WTC11 (cell line): ENCODE measurements at regions of chr4 and their contacts with region 1.

Region 1: DNA sequence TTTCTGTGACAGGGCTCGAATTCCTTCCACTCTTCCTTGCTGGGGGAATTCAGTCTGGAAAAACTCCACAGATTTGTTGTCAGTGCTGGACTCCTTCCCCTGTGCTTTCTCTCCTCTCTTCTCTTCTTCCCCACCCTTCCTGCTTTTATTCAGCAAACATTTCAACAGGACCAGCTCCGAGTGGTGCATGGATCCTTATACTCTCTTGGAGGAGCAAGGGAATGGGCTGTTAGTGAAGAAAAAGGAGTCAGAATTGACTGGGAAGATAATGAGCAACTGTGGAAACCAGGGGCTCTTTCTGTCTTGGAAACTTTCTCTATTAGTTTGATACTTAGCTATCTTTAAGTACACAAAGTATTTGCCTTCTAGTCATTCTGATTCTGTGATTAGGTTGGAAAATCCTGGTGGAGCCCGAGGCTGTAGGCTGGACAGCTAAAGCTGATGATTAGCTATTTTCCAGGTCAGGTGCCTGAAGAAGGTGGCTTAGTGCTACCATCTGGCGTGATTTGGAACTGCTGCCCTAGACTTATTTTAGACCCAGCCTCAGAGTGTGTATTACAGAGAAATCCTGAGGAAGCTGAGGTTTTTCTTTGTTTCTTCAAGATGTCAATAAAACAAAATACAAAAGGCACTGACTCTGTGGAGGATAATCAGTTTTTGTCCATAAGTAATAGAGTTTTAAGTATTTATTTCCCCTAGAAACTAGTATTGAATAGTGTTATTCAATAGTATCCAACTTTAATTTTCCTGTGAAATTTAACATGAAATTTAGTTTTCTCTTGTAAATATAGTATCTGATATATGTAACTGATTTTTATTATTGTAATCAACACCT is 38.4 kb downstream of the NAP1L5 start:
- DNase-seq: peak; percentile 32
- ATAC-seq: peak; percentile 99
- H3K4me3 Mint-ChIP-seq: no peak overlapping the region
- H3K27ac Mint-ChIP-seq: no peak overlapping the region; the same call in 1 of the 2 replicates
- H3K4me1 Mint-ChIP-seq: peaks cover 19% of the 10 kb centered on the region
- H3K27me3 Mint-ChIP-seq: no peaks in the 10 kb centered on the region
- CTCF ChIP-seq: peak; percentile 43; the same call in 1 of the 2 replicates

Region 2: GRCh38 chr4:88523325-88524129 is 135.7 kb before region 1 on chr4 and contains the start of gene PYURF:
- CTCF ChIA-PET with region 1: interaction called, 74 read pairs
- POLR2A ChIA-PET with region 1: no interaction called
- DNase-seq: peak; percentile 95
- ATAC-seq: peak; percentile 93
- H3K4me3 Mint-ChIP-seq: peak within 1 kb of the TSS; percentile 95
- H3K27ac Mint-ChIP-seq: peak within 1 kb of the TSS; percentile 68
- H3K4me1 Mint-ChIP-seq: peaks cover 33% of the 10 kb centered on the region
- H3K27me3 Mint-ChIP-seq: no peaks in the 10 kb centered on the region
- CTCF ChIP-seq: no peak
- total RNA-seq, gene PYURF: 40.9 to 45.3 TPM (median 43.6 TPM) in 3 replicates

Region 3: DNA sequence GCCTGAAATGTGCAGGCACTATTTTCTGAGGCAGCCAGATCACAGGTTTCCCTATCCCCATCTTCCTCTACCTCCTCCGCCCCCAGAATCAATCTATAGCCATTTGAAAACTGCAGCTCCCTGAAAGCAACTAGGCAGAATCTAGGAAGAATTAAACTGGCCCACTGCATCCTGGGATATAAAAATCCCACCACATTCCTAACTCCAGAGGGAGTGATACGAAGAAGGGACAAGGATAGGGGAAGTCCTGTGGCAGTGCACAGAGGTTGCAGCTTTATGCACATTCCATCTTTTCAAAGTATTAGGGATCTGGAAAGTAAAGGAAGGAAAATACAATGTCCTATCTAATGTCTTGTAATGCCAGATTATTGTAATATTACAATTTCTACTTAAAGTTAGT is 85.3 kb before region 1 on chr4:
- CTCF ChIA-PET with region 1: interaction called, 18 read pairs
- POLR2A ChIA-PET with region 1: no interaction called
- DNase-seq: no peak
- ATAC-seq: peak; percentile 98
- H3K4me3 Mint-ChIP-seq: no peak overlapping the region
- H3K27ac Mint-ChIP-seq: no peak overlapping the region
- H3K4me1 Mint-ChIP-seq: peaks cover 18% of the 10 kb centered on the region
- H3K27me3 Mint-ChIP-seq: peaks cover 2% of the 10 kb centered on the region; the same call in 1 of the 2 replicates
- CTCF ChIP-seq: no peak

Region 4: DNA sequence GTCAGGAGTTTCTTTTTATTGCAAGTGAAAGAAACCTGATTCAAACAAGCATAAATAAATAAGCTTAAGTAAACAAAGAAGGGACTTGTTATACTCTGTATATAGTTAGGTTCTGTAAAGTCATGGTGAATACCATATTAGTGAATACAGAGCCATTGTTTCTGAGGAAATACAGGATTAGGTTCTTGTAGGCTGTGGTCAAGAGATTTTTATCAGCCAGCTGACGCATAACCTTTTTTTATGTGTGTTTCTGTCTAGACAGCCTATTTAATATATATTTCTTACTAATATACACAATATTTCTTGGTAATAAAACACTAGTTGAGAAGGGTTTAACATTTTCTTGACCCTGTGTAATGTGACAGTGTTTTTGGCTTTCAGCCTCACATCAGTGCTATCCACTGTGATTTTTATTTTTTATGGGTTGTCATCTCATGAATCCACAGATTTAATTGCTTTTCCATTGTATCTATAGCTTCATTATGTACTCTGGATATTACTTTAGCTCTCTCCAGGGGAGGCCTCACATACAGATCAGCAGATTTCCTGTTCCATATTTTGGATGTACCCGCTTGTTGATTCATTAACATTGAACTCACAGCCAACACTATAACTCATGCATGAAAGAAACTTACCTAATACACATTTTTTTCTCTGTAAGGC is 59.0 kb before region 1 on chr4:
- CTCF ChIA-PET with region 1: interaction called, 16 read pairs
- POLR2A ChIA-PET with region 1: no interaction called
- DNase-seq: no peak
- ATAC-seq: no peak
- H3K4me3 Mint-ChIP-seq: no peak overlapping the region
- H3K27ac Mint-ChIP-seq: no peak overlapping the region
- H3K4me1 Mint-ChIP-seq: peaks cover 39% of the 10 kb centered on the region
- H3K27me3 Mint-ChIP-seq: peaks cover 10% of the 10 kb centered on the region
- CTCF ChIP-seq: no peak

Region 5: DNA sequence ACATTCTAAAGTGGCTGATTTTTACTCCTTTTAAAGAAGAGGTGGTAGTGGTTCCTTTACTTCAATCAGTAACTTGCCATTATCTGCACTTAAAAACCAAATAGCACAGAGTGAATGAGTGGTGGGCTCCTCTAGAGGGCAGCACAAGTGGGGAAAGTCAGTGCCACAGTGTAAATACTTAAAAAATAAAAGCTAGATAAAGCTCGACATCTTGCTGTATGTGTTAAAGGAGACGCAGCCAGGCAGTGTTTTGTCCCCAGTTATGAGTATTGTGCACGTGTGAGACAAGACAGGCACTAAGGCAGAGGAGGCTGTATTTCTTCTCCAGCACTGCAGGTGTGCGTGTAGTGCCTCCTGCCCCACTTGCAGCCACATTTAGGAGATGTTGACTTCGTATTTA is 13.7 kb after region 1 on chr4:
- CTCF ChIA-PET with region 1: interaction called, 19 read pairs
- POLR2A ChIA-PET with region 1: no interaction called
- DNase-seq: peak; percentile 47
- ATAC-seq: peak; percentile 91
- H3K4me3 Mint-ChIP-seq: no peak overlapping the region
- H3K27ac Mint-ChIP-seq: no peak overlapping the region
- H3K4me1 Mint-ChIP-seq: 0 out of 2 replicates have a peak, but pooled peaks cover 2% of the 10 kb centered on the region
- H3K27me3 Mint-ChIP-seq: no peaks in the 10 kb centered on the region
- CTCF ChIP-seq: peak; percentile 31; the same call in 1 of the 2 replicates

Region 6: GRCh38 chr4:88719381-88719780 is 60.1 kb after region 1 on chr4:
- CTCF ChIA-PET with region 1: no interaction called
- POLR2A ChIA-PET with region 1: no interaction called
- DNase-seq: no peak
- ATAC-seq: no peak
- H3K4me3 Mint-ChIP-seq: no peak overlapping the region
- H3K27ac Mint-ChIP-seq: no peak overlapping the region
- H3K4me1 Mint-ChIP-seq: no peaks in the 10 kb centered on the region
- H3K27me3 Mint-ChIP-seq: peaks cover 3% of the 10 kb centered on the region; the same call in 1 of the 2 replicates
- CTCF ChIP-seq: no peak

Region 7: DNA sequence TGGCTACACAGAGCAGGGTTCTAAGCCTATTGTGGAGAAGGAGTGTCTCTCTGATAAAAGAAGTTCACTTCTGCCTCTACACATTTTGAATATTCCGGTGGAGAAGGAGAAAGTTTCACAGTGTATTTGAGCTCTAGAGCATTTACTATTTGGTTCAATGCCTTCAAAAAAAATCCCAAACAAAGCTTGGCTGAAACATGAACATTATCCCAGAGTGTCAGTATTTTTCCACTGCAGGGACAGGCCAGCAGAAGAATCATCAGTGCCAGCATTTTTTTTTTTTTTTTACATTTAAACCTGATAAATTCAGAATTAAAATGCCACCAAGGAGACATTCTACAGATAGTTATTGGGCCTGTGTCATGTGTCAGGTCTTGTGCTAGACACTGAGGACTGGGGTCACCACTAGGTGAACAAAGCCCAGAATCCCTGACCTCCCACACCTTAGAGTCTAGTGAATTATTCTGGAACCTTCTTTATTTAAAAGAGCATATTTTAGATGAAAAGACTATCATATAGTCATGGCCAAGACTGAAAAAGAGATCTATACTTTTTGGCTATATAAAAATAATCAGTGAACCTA is 86.4 kb after region 1 on chr4:
- CTCF ChIA-PET with region 1: no interaction called
- POLR2A ChIA-PET with region 1: no interaction called
- DNase-seq: no peak
- ATAC-seq: no peak
- H3K4me3 Mint-ChIP-seq: no peak overlapping the region
- H3K27ac Mint-ChIP-seq: 0 out of 2 replicates have a peak overlapping the region, but pooled peaks have one; percentile 29
- H3K4me1 Mint-ChIP-seq: peaks cover 5% of the 10 kb centered on the region
- H3K27me3 Mint-ChIP-seq: no peaks in the 10 kb centered on the region
- CTCF ChIP-seq: no peak

Region 8: DNA sequence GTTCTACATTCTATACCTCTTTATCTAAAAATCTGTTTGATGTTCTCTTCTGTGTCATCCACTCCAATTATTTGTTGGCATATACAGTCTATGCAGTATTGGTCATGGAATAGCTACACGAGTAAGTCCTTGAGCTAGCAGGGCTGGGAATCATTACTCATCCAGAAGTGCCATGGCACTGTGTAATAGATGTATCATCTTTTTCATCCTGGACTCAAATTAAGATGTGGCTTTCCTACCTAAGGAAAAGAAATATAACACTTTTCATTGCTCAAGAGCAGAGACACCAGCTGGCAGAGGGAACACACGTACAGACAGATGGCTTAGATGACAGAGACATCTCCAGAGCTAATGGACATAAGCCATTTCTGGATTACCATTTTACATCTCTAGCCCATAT is 237.9 kb after region 1 on chr4:
- CTCF ChIA-PET with region 1: no interaction called
- POLR2A ChIA-PET with region 1: no interaction called
- DNase-seq: no peak
- ATAC-seq: no peak
- H3K4me3 Mint-ChIP-seq: no peak overlapping the region
- H3K27ac Mint-ChIP-seq: no peak overlapping the region
- H3K4me1 Mint-ChIP-seq: peaks cover 9% of the 10 kb centered on the region
- H3K27me3 Mint-ChIP-seq: no peaks in the 10 kb centered on the region
- CTCF ChIP-seq: no peak

Region 9: GRCh38 chr4:88928852-88929251 is 269.6 kb after region 1 on chr4:
- CTCF ChIA-PET with region 1: no interaction called
- POLR2A ChIA-PET with region 1: no interaction called
- DNase-seq: no peak
- ATAC-seq: no peak
- H3K4me3 Mint-ChIP-seq: no peak overlapping the region
- H3K27ac Mint-ChIP-seq: no peak overlapping the region
- H3K4me1 Mint-ChIP-seq: 0 out of 2 replicates have a peak, but pooled peaks cover 5% of the 10 kb centered on the region
- H3K27me3 Mint-ChIP-seq: no peaks in the 10 kb centered on the region
- CTCF ChIP-seq: no peak